CD14-positive monocyte (primary cell): ENCODE measurements at regions of chr4 and their contacts with region 1.

Region 1: DNA sequence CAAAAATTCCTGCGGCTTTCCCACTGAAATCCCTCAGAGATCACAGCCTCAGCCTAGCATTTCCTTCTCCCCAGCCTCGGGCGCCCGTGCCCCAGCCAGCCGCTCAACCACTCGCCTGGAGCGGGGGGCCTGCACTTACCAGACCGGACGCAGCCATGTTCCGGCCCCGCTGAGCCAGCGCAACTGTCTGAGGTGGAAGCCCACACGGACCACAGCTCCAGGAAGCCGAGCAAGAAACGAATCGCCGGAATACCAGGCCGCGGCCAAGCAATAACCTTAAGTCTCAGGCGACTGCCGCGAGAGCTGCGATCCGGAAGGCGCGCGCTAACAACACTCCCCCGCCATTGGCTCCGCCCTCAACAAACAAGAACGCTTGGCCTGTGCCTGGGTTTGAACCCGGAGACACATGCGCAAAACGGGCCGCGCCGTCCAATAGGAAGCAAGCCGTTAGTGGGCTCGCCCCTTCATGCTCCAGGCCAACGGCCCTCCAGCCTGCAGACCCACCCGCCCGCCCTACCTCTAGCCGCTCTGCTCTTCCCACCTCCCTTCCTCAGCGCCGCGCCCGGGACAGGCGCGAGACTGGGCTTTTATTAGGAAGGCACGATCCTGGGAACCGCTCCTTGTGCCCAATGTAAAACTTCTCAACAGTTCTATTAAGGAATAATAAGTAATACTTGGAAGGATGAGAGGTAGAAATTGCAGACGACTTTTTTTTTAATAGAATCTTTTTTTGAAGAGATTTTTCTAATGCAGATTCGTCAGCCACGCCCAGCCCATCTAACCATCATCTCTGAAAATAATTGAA is at the start of gene CENPC:
- DNase-seq: peak; percentile 84 to 88 (median 85)
- H3K4me3 ChIP-seq: peak within 1 kb of the TSS; percentile 78 to 97 (median 93)
- H3K4me3 Mint-ChIP-seq: peak within 1 kb of the TSS; percentile 96 to 98
- H3K27ac ChIP-seq: peak within 1 kb of the TSS; percentile 98 to 99
- H3K27ac Mint-ChIP-seq: peak within 1 kb of the TSS; percentile 95 to 100 (median 98)
- H3K4me1 ChIP-seq: peaks cover 11 to 13% of the 10 kb centered on the region in 2 donors
- H3K4me1 Mint-ChIP-seq: peaks cover 22% of the 10 kb centered on the region
- H3K27me3 ChIP-seq: no peaks in the 10 kb centered on the region
- H3K27me3 Mint-ChIP-seq: no peaks in the 10 kb centered on the region
- CTCF ChIP-seq: no peak
- polyA plus RNA-seq, gene CENPC: 6.3 to 7.2 (median 6.7) TPM

Region 2: GRCh38 chr4:67699628-67700027 is 154.2 kb after region 1 on chr4:
- intact Hi-C with region 1: loop called in 1 of 2 experiments (anchors 10 kb)
- DNase-seq: no peak
- H3K4me3 ChIP-seq: peak overlapping the region in 1 of 3 experiments; percentile 96
- H3K4me3 Mint-ChIP-seq: no peak overlapping the region
- H3K27ac ChIP-seq: peak overlapping the region in 1 of 2 donors; percentile 96
- H3K27ac Mint-ChIP-seq: peak overlapping the region in 6 of 7 donors; percentile 56 to 97 (median 93)
- H3K4me1 ChIP-seq: peaks cover 17 to 21% of the 10 kb centered on the region in 2 donors
- H3K4me1 Mint-ChIP-seq: peaks cover 21% of the 10 kb centered on the region
- H3K27me3 ChIP-seq: no peaks in the 10 kb centered on the region
- H3K27me3 Mint-ChIP-seq: no peaks in the 10 kb centered on the region
- CTCF ChIP-seq: no peak